OCI-LY7 (cell line): ENCODE measurements at regions of chr12 and their contacts with region 1.

Region 1: DNA sequence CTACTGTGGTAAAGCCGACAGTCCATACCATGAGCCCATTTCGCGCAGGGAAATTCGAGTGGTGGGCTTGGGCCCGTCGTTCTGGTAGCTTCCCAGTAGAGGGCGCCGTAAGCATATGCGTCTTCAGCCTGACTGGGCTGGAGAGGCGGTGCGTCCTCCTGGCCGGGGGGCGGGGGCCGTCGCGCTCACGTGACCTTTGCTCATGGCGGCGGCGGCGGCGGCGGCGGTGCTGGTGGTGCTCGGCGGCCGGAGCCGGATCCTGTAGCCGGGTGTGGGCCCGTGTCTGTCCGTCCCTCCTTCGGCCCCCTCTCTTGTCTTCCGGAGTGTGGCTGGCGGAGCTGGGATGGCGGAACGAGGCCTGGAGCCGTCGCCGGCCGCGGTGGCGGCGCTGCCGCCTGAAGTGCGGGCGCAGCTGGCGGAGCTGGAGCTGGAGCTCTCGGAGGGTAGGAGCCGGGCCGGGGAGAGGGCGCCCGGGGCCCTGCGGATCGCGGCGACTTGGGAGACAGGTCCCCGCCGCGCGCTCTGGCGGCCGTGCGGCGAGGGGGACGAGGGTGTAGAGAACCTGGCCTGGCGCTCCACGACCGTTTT is at the start of gene DIP2B:
- DNase-seq: peak; percentile 95
- H3K4me3 ChIP-seq: peak within 1 kb of the TSS; percentile 91
- H3K27ac ChIP-seq: peak within 1 kb of the TSS; percentile 56
- H3K4me1 ChIP-seq: peaks cover 11% of the 10 kb centered on the region
- CTCF ChIP-seq: peak; percentile 86
- total RNA-seq, gene DIP2B: 17.0 TPM in 2 replicates

Region 2: GRCh38 chr12:50483488-50483887 is 21.4 kb before region 1 on chr12:
- CTCF ChIA-PET with region 1: no interaction called
- POLR2A ChIA-PET with region 1: no interaction called
- intact Hi-C with region 1: no loop called
- DNase-seq: no peak
- H3K4me3 ChIP-seq: no peak overlapping the region
- H3K27ac ChIP-seq: no peak overlapping the region
- H3K4me1 ChIP-seq: no peaks in the 10 kb centered on the region
- CTCF ChIP-seq: 0 out of 2 replicates have a peak, but pooled peaks have one; percentile 13

Region 3: GRCh38 chr12:50520416-50521207 is 15.7 kb after region 1 on chr12:
- CTCF ChIA-PET with region 1: interaction called, 3 read pairs
- POLR2A ChIA-PET with region 1: interaction called, 10 read pairs
- intact Hi-C with region 1: no loop called
- DNase-seq: no peak
- H3K4me3 ChIP-seq: no peak overlapping the region
- H3K27ac ChIP-seq: peak overlapping the region; percentile 17
- H3K4me1 ChIP-seq: peaks cover 34% of the 10 kb centered on the region
- CTCF ChIP-seq: no peak

Region 4: DNA sequence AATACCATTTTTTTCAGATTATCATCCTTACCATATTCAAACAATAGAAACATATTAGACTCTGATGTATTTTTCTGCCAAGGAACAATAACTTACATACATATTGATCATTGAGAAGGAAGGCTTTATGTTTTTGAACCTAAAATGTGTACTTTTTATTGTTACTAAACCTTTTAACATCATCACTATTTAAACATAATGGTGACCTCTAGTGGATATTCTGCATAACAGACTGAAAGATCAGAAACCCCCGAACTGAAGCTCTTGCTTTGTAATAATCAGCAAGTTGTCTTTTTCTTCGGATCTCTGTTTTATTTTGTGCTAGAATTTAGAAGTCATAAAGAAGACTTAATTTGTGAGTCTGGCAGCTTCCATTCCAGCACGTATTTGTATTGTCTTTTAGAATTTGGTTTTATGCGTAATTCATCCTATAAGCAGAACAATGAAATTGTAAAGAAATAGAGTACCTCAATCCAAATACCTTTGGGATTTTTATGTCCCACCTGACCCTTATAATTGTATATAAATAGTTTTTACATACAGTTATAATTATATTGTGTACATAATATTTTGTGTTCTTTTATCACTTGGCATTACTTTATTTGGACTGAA is 133.1 kb after region 1 on chr12:
- CTCF ChIA-PET with region 1: interaction called, 5 read pairs
- POLR2A ChIA-PET with region 1: interaction called, 14 read pairs
- intact Hi-C with region 1: loop called (anchors 1 kb)
- DNase-seq: peak; percentile 67
- H3K4me3 ChIP-seq: no peak overlapping the region
- H3K27ac ChIP-seq: no peak overlapping the region
- H3K4me1 ChIP-seq: peaks cover 8% of the 10 kb centered on the region
- CTCF ChIP-seq: peak; percentile 95

Region 5: GRCh38 chr12:50734409-50735263 is 229.7 kb after region 1 on chr12:
- CTCF ChIA-PET with region 1: no interaction called
- POLR2A ChIA-PET with region 1: interaction called, 4 read pairs
- intact Hi-C with region 1: loop called (anchors 1 kb)
- DNase-seq: peak; percentile 64
- H3K4me3 ChIP-seq: no peak overlapping the region
- H3K27ac ChIP-seq: no peak overlapping the region
- H3K4me1 ChIP-seq: no peaks in the 10 kb centered on the region
- CTCF ChIP-seq: peak; percentile 94